T-cell (primary cell): ENCODE measurements at regions of chr1 and their contacts with region 1.

Region 1: GRCh38 chr1:85228972-85229371 is 28.2 kb upstream of the SYDE2 start:
- DNase-seq: no peak
- ATAC-seq: no peak
- H3K4me3 ChIP-seq: no peak overlapping the region
- H3K4me3 Mint-ChIP-seq: no peak overlapping the region
- H3K27ac ChIP-seq: no peak overlapping the region
- H3K27ac Mint-ChIP-seq: no peak overlapping the region
- H3K4me1 ChIP-seq: no peaks in the 10 kb centered on the region
- H3K4me1 Mint-ChIP-seq: peaks cover 0 to 2% (median 0%) of the 10 kb centered on the region in 3 donors
- H3K27me3 ChIP-seq: no peaks in the 10 kb centered on the region
- H3K27me3 Mint-ChIP-seq: peaks cover 2 to 7% of the 10 kb centered on the region in 2 donors

Region 2: DNA sequence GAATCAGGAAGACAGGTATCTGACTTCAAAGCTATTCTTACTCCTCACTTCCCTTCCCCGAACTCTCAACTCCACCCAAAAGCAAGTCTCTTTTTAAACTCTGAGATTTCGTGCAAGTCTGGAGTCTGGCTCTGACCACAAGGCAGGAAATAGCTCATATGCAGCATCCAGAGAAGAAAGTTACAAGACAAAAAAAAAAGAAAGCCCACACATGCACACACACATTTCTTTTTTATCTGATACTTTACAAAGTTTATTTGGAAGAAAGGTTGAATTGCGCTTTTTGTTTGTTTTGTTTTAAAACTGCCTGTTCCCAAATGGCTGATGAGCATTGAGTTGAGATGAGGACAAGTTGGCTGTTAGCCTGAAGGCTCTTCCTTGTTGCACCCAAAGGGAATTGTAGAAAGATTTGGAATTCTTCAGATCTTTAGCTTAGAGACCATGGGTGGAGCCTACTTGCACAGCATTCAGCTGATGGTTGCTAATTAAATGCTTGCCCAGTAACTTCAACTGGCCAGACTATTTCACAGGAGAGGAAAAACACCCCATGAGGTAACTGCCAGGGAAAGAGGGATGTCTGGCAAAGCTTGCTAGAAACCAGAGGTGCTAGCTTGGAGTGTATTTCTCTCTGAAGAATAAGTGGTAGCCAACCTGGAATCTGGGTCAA is 1720.4 kb before region 1 on chr1:
- CTCF ChIA-PET with region 1: no interaction called
- POLR2A ChIA-PET with region 1: no interaction called
- DNase-seq: peak in 33 of 35 experiments; percentile 1 to 80 (median 27)
- ATAC-seq: peak; percentile 95 to 99 (median 96)
- H3K4me3 ChIP-seq: peak overlapping the region in 1 of 2 donors; percentile 51
- H3K4me3 Mint-ChIP-seq: peak overlapping the region; percentile 57 to 76 (median 62)
- H3K27ac ChIP-seq: peak overlapping the region; percentile 58
- H3K27ac Mint-ChIP-seq: peak overlapping the region; percentile 95 to 99
- H3K4me1 ChIP-seq: peaks cover 12 to 36% of the 10 kb centered on the region in 2 experiments
- H3K4me1 Mint-ChIP-seq: peaks cover 37 to 64% (median 46%) of the 10 kb centered on the region in 3 donors
- H3K27me3 ChIP-seq: no peaks in the 10 kb centered on the region
- H3K27me3 Mint-ChIP-seq: no peaks in the 10 kb centered on the region

Region 3: GRCh38 chr1:84620720-84621313 is 608.2 kb before region 1 on chr1:
- CTCF ChIA-PET with region 1: no interaction called
- POLR2A ChIA-PET with region 1: no interaction called
- DNase-seq: peak; percentile 45 to 86 (median 70)
- ATAC-seq: peak; percentile 91 to 95 (median 92)
- H3K4me3 ChIP-seq: peak overlapping the region; percentile 65 to 69
- H3K4me3 Mint-ChIP-seq: peak overlapping the region; percentile 81 to 87 (median 86)
- H3K27ac ChIP-seq: no peak overlapping the region
- H3K27ac Mint-ChIP-seq: peak overlapping the region in 1 of 2 donors; percentile 87
- H3K4me1 ChIP-seq: peaks cover 0 to 9% of the 10 kb centered on the region in 2 experiments
- H3K4me1 Mint-ChIP-seq: peaks cover 0 to 7% (median 5%) of the 10 kb centered on the region in 3 donors
- H3K27me3 ChIP-seq: peaks cover 0 to 3% of the 10 kb centered on the region in 2 experiments
- H3K27me3 Mint-ChIP-seq: peaks cover 0 to 4% of the 10 kb centered on the region in 2 donors

Region 4: GRCh38 chr1:84825161-84825560 is 403.8 kb before region 1 on chr1:
- CTCF ChIA-PET with region 1: no interaction called
- POLR2A ChIA-PET with region 1: interaction called in 1 of 2 experiments, 11 read pairs
- DNase-seq: no peak
- ATAC-seq: no peak
- H3K4me3 ChIP-seq: no peak overlapping the region
- H3K4me3 Mint-ChIP-seq: no peak overlapping the region
- H3K27ac ChIP-seq: no peak overlapping the region
- H3K27ac Mint-ChIP-seq: no peak overlapping the region
- H3K4me1 ChIP-seq: no peaks in the 10 kb centered on the region
- H3K4me1 Mint-ChIP-seq: peaks cover 0 to 6% (median 0%) of the 10 kb centered on the region in 3 donors
- H3K27me3 ChIP-seq: no peaks in the 10 kb centered on the region
- H3K27me3 Mint-ChIP-seq: peaks cover 0 to 5% of the 10 kb centered on the region in 2 donors